ENCODE measurements at regions of chr12 and their contacts with region 1.

Region 1: DNA sequence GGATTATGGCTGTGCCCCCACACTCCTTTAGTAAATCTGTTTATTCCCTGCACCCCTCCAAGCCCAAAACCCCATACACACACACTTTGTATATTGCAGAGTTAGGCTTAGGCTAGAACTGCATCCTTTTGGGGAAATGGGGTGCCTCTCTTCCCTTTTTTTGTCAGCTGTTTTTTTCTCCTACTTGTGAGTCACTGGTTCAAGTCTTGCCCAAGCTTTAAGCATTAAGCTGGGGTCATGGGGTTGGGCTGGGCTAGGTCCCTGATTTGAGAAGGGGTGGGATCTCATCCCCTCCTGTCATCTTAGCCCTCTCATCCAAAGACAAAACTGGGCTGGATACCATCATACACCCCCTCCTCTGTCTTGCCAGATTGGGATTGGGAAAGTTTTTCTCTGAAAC is 1.6 kb downstream of the LRP1 start:
- DNase-seq: no peak
- ATAC-seq: no peak

Region 2: GRCh38 chr12:57175428-57176138 is 45.7 kb after region 1 on chr12:
- intact Hi-C with region 1: loop called (anchors 2 to 5 kb)
- DNase-seq: peak; percentile 83
- ATAC-seq: peak; percentile 38 to 56

Measured in left cardiac atrium (tissue), 4 donors.